Stomach (tissue), 19 donors: ENCODE measurements at regions of chr19 and their contacts with region 1.

Region 1: GRCh38 chr19:34712395-34713261 is 21.4 kb upstream of the ZNF181 start:
- DNase-seq: peak; percentile 52 to 87
- H3K4me3 ChIP-seq: no peak overlapping the region
- H3K27ac ChIP-seq: no peak overlapping the region
- H3K4me1 ChIP-seq: no peaks in the 10 kb centered on the region
- H3K27me3 ChIP-seq: peaks cover 0 to 7% (median 0%) of the 10 kb centered on the region in 3 donors
- CTCF ChIP-seq: peak in 5 of 7 experiments; percentile 56 to 90 (median 80)
- EP300 ChIP-seq: no peak
- POLR2A ChIP-seq: no peak

Region 2: GRCh38 chr19:34639491-34640085 is 73.0 kb before region 1 on chr19:
- intact Hi-C with region 1: loop called (anchors 2 kb)
- DNase-seq: peak; percentile 60 to 84
- H3K4me3 ChIP-seq: no peak overlapping the region
- H3K27ac ChIP-seq: no peak overlapping the region
- H3K4me1 ChIP-seq: peaks cover 0 to 5% (median 0%) of the 10 kb centered on the region in 4 donors
- H3K27me3 ChIP-seq: no peaks in the 10 kb centered on the region
- CTCF ChIP-seq: peak in 5 of 7 experiments; percentile 54 to 92 (median 76)
- EP300 ChIP-seq: no peak
- POLR2A ChIP-seq: no peak

Region 3: GRCh38 chr19:34677386-34678084 is 35.1 kb before region 1 on chr19 and contains the start of gene ZNF302:
- intact Hi-C with region 1: no loop called
- DNase-seq: peak; percentile 96 to 99
- H3K4me3 ChIP-seq: peak within 1 kb of the TSS; percentile 59 to 84 (median 71)
- H3K27ac ChIP-seq: peak within 1 kb of the TSS; percentile 95 to 98 (median 96)
- H3K4me1 ChIP-seq: peaks cover 6 to 29% (median 26%) of the 10 kb centered on the region in 4 donors
- H3K27me3 ChIP-seq: no peaks in the 10 kb centered on the region
- CTCF ChIP-seq: peak in 1 of 7 experiments; percentile 13
- EP300 ChIP-seq: peak; percentile 12
- POLR2A ChIP-seq: peak in 1 of 4 donors; percentile 56
- total RNA-seq, gene ZNF302: 13.8 to 92.4 (median 21.7) TPM